CD4-positive, alpha-beta memory T cell (primary cell): ENCODE measurements at regions of chr14 and their contacts with region 1.

Region 1: DNA sequence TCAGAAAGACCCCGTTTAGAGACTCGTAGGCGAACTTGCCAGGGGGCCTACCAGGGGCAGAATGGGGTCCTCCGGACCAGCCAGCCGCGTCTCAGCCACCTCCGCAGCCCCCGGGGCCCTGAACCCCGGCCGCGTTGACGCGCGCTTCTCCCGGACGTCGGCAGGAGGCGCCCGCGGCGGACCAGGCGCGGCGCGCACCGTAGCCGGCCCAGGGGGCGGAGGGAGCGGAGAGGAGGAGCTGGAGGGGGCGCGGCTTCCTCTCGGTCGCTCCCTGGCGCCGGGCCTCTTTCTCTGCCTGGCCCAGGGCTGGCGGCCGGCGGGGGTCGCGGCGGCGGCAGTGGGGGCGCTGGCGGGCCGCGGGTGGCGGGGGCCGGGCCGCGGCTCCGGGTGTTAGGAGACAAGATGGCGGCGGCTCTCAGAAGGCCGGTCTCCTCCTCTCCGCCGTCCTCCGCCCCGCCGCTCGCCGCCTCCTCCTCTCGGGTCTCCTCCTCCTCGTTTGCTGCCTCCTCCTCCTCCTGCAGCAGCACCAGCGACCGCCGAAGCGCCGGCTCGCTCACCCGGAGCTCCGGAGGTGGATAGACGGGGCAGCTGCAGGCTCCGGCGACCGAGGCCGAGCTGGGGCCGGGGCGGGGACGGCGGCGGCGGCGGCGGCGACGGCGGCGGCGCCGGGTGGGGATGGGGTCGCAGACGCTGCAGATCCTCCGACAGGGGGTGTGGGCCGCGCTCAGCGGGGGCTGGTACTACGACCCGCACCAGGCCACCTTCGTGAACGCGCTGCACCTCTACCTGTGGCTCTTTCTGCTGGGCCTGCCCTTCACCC is at the start of gene PCNX1:
- DNase-seq: peak; percentile 94 to 95 (median 95)
- H3K4me3 ChIP-seq: peak within 1 kb of the TSS; percentile 74 to 79
- H3K4me3 Mint-ChIP-seq: peak within 1 kb of the TSS; percentile 88 to 99 (median 94)
- H3K27ac ChIP-seq: peak within 1 kb of the TSS; percentile 79
- H3K27ac Mint-ChIP-seq: peak within 1 kb of the TSS; percentile 95 to 99 (median 98)
- H3K4me1 ChIP-seq: peaks cover 61% of the 10 kb centered on the region
- H3K4me1 Mint-ChIP-seq: peaks cover 38 to 73% (median 61%) of the 10 kb centered on the region in 4 donors
- H3K27me3 ChIP-seq: no peaks in the 10 kb centered on the region
- H3K27me3 Mint-ChIP-seq: no peaks in the 10 kb centered on the region
- total RNA-seq, gene PCNX1: 115 to 128 TPM

Region 2: DNA sequence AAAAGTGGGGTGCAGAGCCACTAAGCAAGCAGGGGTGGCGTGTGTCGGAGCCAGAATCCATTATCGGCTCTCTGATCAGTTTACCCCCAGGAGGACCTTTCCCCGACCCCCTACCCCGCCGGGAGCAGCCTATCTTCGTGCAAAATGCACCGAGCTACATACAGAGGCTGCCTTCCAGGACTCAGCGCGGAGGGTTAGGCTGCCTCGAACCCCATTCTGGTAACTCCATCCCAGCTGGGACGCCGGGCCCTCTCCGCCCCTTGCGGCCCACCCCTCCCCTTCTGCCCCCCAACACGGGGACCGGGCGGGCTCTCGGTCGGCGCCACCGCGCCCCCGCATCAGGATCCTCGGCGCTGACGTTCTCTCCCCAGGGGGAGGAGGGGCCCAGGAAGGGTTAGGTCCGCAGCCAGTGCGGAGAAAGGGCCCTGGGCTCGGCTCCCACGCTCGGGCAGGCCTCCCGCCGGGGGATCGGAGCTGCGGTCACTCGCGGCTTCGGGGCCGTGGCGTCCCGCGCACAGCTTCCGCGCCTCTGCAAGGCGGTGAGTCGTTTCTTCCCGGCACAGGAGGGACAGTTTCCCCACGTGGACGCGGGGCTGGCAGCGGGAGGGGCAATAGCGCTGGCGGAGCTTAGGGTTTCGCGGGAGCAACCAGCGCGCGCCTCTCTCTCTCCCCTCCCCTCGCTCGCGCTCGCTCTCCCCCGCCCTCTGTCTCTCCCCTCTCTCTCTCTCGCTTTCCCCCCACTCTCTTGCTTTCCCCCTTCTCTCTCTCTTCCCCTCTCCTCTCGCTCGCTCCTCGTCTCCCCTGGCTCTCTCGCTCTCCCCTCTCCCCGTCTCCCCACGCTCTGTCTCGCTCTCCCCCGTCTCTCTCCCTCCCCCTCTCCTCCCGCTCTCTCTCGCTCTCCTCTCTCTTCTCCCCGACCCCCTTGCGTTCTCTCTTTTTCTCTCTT is 85.5 kb before region 1 on chr14:
- CTCF ChIA-PET with region 1: interaction called, 49 read pairs
- POLR2A ChIA-PET with region 1: interaction called, 15 read pairs
- intact Hi-C with region 1: loop called (anchors 1 kb)
- DNase-seq: peak; percentile 37 to 79 (median 49)
- H3K4me3 ChIP-seq: peak overlapping the region; percentile 52 to 73
- H3K4me3 Mint-ChIP-seq: peak overlapping the region; percentile 83 to 93 (median 86)
- H3K27ac ChIP-seq: peak overlapping the region; percentile 14
- H3K27ac Mint-ChIP-seq: peak overlapping the region in 5 of 7 donors; percentile 62 to 77 (median 68)
- H3K4me1 ChIP-seq: peaks cover 18% of the 10 kb centered on the region
- H3K4me1 Mint-ChIP-seq: peaks cover 10 to 23% (median 14%) of the 10 kb centered on the region in 4 donors
- H3K27me3 ChIP-seq: no peaks in the 10 kb centered on the region
- H3K27me3 Mint-ChIP-seq: no peaks in the 10 kb centered on the region

Region 3: DNA sequence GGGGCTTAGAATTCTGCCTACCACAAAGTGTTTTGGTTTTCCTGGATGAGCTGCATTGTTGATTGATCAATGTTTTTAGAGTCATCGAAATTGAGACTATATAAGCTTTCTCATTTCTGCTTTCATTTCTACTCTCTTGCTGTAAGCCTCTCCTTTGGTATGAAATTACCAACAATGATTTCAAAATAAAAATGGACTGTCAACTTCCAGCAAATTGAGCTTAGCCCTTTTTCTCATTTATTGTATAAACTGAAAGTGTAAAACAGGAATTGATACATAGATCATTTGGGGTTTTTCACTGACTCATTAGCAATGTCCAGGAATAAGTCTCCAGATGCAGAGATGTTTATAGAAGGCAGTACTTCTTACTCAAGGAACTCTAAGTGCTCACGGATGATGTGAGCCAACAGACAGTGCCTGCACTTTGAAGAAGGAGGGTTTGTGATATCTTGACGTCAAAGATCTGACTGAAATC is 20.1 kb before region 1 on chr14:
- CTCF ChIA-PET with region 1: interaction called, 62 read pairs
- POLR2A ChIA-PET with region 1: interaction called, 164 read pairs
- intact Hi-C with region 1: loop called (anchors 2 kb)
- DNase-seq: peak in 3 of 5 donors; percentile 27 to 51 (median 30)
- H3K4me3 ChIP-seq: peak overlapping the region; percentile 11 to 42
- H3K4me3 Mint-ChIP-seq: peak overlapping the region; percentile 69 to 90 (median 76)
- H3K27ac ChIP-seq: peak overlapping the region; percentile 55
- H3K27ac Mint-ChIP-seq: peak overlapping the region; percentile 87 to 97 (median 91)
- H3K4me1 ChIP-seq: peaks cover 96% of the 10 kb centered on the region
- H3K4me1 Mint-ChIP-seq: peaks cover 66 to 99% (median 86%) of the 10 kb centered on the region in 4 donors
- H3K27me3 ChIP-seq: no peaks in the 10 kb centered on the region
- H3K27me3 Mint-ChIP-seq: no peaks in the 10 kb centered on the region

Region 4: GRCh38 chr14:70934502-70935134 is 27.2 kb after region 1 on chr14:
- CTCF ChIA-PET with region 1: interaction called, 62 read pairs
- POLR2A ChIA-PET with region 1: interaction called, 96 read pairs
- intact Hi-C with region 1: no loop called
- DNase-seq: peak in 2 of 5 donors; percentile 22 to 29
- H3K4me3 ChIP-seq: peak overlapping the region in 1 of 2 donors; percentile 15
- H3K4me3 Mint-ChIP-seq: peak overlapping the region; percentile 57 to 84 (median 78)
- H3K27ac ChIP-seq: peak overlapping the region; percentile 27
- H3K27ac Mint-ChIP-seq: peak overlapping the region; percentile 70 to 92 (median 83)
- H3K4me1 ChIP-seq: peaks cover 54% of the 10 kb centered on the region
- H3K4me1 Mint-ChIP-seq: peaks cover 57 to 93% (median 71%) of the 10 kb centered on the region in 4 donors
- H3K27me3 ChIP-seq: no peaks in the 10 kb centered on the region
- H3K27me3 Mint-ChIP-seq: no peaks in the 10 kb centered on the region

Region 5: GRCh38 chr14:70955543-70956480 is 48.4 kb after region 1 on chr14:
- CTCF ChIA-PET with region 1: interaction called, 219 read pairs
- POLR2A ChIA-PET with region 1: interaction called, 136 read pairs
- intact Hi-C with region 1: loop called (anchors 1 kb)
- DNase-seq: peak; percentile 55 to 62 (median 58)
- H3K4me3 ChIP-seq: no peak overlapping the region
- H3K4me3 Mint-ChIP-seq: peak overlapping the region in 3 of 8 donors; percentile 66 to 79 (median 74)
- H3K27ac ChIP-seq: no peak overlapping the region
- H3K27ac Mint-ChIP-seq: peak overlapping the region; percentile 15 to 81 (median 70)
- H3K4me1 ChIP-seq: peaks cover 51% of the 10 kb centered on the region
- H3K4me1 Mint-ChIP-seq: peaks cover 35 to 55% (median 42%) of the 10 kb centered on the region in 4 donors
- H3K27me3 ChIP-seq: no peaks in the 10 kb centered on the region
- H3K27me3 Mint-ChIP-seq: no peaks in the 10 kb centered on the region

Region 6: GRCh38 chr14:70988452-70988851 is 81.1 kb after region 1 on chr14:
- CTCF ChIA-PET with region 1: interaction called, 16 read pairs
- POLR2A ChIA-PET with region 1: interaction called, 9 read pairs
- intact Hi-C with region 1: no loop called
- DNase-seq: peak in 4 of 5 donors; percentile 22 to 47 (median 27)
- H3K4me3 ChIP-seq: peak overlapping the region; percentile 21 to 71
- H3K4me3 Mint-ChIP-seq: peak overlapping the region; percentile 81 to 89 (median 87)
- H3K27ac ChIP-seq: peak overlapping the region; percentile 50
- H3K27ac Mint-ChIP-seq: peak overlapping the region; percentile 79 to 92 (median 85)
- H3K4me1 ChIP-seq: peaks cover 56% of the 10 kb centered on the region
- H3K4me1 Mint-ChIP-seq: peaks cover 28 to 61% (median 45%) of the 10 kb centered on the region in 4 donors
- H3K27me3 ChIP-seq: no peaks in the 10 kb centered on the region
- H3K27me3 Mint-ChIP-seq: no peaks in the 10 kb centered on the region